ENCODE measurements at regions of chr5 and their contacts with region 1.

Region 1: GRCh38 chr5:176660860-176661641 is 13.8 kb downstream of the TSPAN17 start:
- DNase-seq: peak; percentile 89
- H3K27ac ChIP-seq: no peak overlapping the region
- CTCF ChIP-seq: peak; percentile 99

Region 2: GRCh38 chr5:176590035-176590717 is 70.9 kb before region 1 on chr5:
- CTCF ChIA-PET with region 1: interaction called, 11 read pairs
- POLR2A ChIA-PET with region 1: no interaction called
- DNase-seq: peak; percentile 54
- H3K27ac ChIP-seq: no peak overlapping the region
- CTCF ChIP-seq: no peak

Region 3: DNA sequence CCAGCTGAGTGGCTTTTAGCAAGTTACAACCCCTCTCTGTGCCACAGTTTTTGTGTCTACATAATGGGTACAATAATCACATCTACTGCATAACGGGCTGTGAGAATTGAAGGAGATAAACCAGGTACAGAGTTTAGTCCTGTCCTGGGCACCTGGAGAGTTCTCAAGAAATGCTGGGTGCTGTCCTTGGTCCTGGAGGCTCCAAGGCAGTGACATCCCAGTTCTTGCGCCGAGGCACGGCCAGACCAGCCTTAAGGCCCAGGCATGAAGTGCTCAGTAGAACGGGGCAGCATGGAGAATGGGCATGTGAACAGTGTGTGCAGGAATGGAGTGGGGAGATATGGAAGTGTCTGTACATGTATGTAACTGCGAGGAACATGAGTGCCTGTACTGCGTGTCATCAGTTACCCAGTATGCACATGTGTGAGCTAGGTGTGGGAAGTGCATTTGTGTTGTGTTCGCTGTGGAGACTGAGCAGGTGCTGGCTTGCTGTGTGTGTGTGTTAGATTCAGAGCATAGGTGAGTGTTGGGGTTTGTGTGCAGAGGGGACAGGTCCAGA is 143.0 kb after region 1 on chr5:
- CTCF ChIA-PET with region 1: interaction called, 10 read pairs
- POLR2A ChIA-PET with region 1: no interaction called
- DNase-seq: no peak
- H3K27ac ChIP-seq: no peak overlapping the region
- CTCF ChIP-seq: no peak

Region 4: DNA sequence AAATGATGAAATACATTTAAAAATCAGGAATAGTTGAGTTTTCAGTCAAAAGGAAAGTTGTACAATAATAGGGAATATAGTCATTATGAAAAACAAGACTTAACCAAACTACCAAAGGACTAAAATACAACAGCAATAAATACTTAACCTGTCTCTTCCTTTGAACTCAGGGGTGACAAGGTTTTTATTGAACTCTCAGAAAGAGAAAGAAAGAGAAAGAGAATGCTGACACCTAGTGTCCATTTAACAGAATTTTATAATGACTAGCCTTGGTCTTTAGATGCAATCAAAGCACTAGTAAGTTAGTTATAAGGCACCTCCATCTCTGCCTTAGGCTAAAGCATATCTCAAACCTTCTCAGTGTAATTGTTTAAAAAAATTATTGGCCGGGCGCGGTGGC is 298.0 kb after region 1 on chr5:
- CTCF ChIA-PET with region 1: interaction called, 14 read pairs
- POLR2A ChIA-PET with region 1: no interaction called
- DNase-seq: peak; percentile 40
- H3K27ac ChIP-seq: no peak overlapping the region
- CTCF ChIP-seq: peak; percentile 58

Region 5: DNA sequence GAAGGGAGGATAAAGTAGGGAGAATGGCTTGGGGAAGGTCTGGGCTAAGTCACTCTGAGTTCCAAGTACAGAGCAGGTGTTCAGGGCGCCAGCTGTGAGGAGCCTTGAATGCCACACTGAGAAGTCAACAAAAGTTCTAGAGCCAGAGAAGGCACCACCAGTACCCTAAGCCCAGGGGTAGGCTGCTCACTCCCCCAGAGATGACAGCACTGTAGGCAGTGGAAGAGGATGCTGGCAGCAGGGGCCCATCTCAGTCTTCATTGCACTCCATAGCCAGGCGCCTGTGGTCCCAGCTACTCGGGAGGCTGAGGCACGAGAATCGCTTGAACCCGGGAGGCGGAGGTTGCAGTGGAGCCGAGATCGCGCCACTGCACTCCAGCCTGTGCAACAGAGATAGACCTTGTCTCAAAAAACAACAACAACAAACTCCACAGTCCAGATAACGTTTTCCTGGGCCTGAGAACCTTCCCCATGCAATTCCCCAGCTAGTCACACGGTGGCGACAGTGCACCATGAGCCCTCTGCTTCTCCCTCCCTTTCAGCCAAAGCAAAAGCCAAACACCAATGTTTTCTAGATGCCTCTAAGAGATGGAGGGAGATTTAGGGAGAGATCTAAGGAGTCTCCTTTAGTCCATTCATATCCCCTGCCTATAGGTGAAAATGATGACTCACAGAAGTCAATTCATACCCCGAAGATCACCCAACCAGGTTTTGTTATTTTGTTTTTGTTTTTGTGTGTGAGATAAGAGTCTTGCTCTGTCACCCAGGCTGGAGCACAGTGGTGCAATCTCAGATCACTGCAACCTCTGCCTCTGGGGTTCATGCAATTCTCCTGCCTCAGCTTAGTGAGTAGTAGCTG is 452.7 kb after region 1 on chr5:
- CTCF ChIA-PET with region 1: interaction called, 13 read pairs
- POLR2A ChIA-PET with region 1: no interaction called
- DNase-seq: peak; percentile 94
- H3K27ac ChIP-seq: no peak overlapping the region
- CTCF ChIP-seq: peak; percentile 100